ENCODE measurements at regions of chr11 and their contacts with region 1.

Region 1: GRCh38 chr11:118870396-118871345 is 13.0 kb upstream of the CXCR5 start:
- DNase-seq: peak in 1 of 5 donors; percentile 58
- H3K4me3 ChIP-seq: peak overlapping the region; percentile 35
- H3K4me3 Mint-ChIP-seq: peak overlapping the region; percentile 72 to 92 (median 83)
- H3K27ac ChIP-seq: peak overlapping the region; percentile 87
- H3K27ac Mint-ChIP-seq: peak overlapping the region; percentile 98 to 100 (median 99)
- H3K4me1 ChIP-seq: peaks cover 62% of the 10 kb centered on the region
- H3K4me1 Mint-ChIP-seq: peaks cover 47 to 69% (median 56%) of the 10 kb centered on the region in 3 donors
- H3K27me3 ChIP-seq: no peaks in the 10 kb centered on the region
- H3K27me3 Mint-ChIP-seq: no peaks in the 10 kb centered on the region

Region 2: DNA sequence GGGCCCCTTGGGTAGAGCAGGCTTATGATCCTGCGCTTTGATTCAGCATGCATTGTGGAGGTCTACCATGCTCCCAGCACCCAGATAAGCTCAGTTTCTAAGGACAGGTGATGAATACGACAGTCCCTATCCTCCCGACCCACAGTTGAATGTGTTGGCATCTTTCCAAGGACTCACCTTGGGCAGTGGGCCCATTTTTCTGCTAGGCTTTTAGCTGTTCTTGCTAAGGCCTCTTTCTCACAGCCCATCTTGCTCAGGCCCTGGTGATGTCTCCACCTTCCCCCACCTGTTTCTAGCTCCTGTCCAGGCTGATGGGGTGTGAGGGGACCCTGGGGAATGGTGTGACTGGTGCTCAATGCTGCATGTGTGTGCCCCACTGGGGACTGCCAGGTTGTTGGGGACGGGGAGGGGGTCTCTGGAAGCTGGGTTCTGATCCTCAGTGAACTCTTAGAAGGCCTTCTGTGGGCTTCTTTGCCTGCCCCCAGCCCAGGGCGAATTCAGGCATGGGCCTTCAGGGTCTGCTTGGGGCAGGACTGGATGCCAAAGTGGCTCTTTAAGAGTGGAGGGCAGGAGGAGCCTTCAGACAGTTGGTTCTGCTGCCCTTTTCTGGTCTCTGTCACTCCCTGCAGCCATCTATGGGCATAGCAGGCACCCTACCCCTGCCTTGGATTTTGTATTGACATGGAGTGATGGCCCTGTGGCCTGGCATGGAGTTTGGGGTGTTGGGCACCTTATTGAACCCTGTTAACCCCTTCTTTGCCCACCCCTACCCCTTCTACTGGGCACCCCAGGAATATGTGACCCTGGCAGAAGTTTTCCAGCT is 230.1 kb before region 1 on chr11:
- CTCF ChIA-PET with region 1: no interaction called
- POLR2A ChIA-PET with region 1: no interaction called
- DNase-seq: no peak
- H3K4me3 ChIP-seq: no peak overlapping the region
- H3K4me3 Mint-ChIP-seq: no peak overlapping the region
- H3K27ac ChIP-seq: no peak overlapping the region
- H3K27ac Mint-ChIP-seq: no peak overlapping the region
- H3K4me1 ChIP-seq: no peaks in the 10 kb centered on the region
- H3K4me1 Mint-ChIP-seq: no peaks in the 10 kb centered on the region
- H3K27me3 ChIP-seq: no peaks in the 10 kb centered on the region
- H3K27me3 Mint-ChIP-seq: peaks cover 0 to 1% of the 10 kb centered on the region in 2 donors

Region 3: GRCh38 chr11:118859973-118860372 is 10.7 kb before region 1 on chr11:
- CTCF ChIA-PET with region 1: no interaction called
- POLR2A ChIA-PET with region 1: interaction called, 13 read pairs
- DNase-seq: no peak
- H3K4me3 ChIP-seq: no peak overlapping the region
- H3K4me3 Mint-ChIP-seq: no peak overlapping the region
- H3K27ac ChIP-seq: no peak overlapping the region
- H3K27ac Mint-ChIP-seq: peak overlapping the region in 6 of 8 donors; percentile 29 to 67 (median 46)
- H3K4me1 ChIP-seq: no peaks in the 10 kb centered on the region
- H3K4me1 Mint-ChIP-seq: peaks cover 8 to 18% (median 12%) of the 10 kb centered on the region in 3 donors
- H3K27me3 ChIP-seq: no peaks in the 10 kb centered on the region
- H3K27me3 Mint-ChIP-seq: no peaks in the 10 kb centered on the region

Region 4: GRCh38 chr11:118883368-118884071 is 12.8 kb after region 1 on chr11 and contains the start of gene CXCR5:
- CTCF ChIA-PET with region 1: interaction called, 10 read pairs
- POLR2A ChIA-PET with region 1: interaction called, 10 read pairs
- DNase-seq: peak in 1 of 5 donors; percentile 68
- H3K4me3 ChIP-seq: no peak within 1 kb of the TSS
- H3K4me3 Mint-ChIP-seq: peak within 1 kb of the TSS; percentile 54 to 80 (median 76)
- H3K27ac ChIP-seq: peak within 1 kb of the TSS; percentile 21
- H3K27ac Mint-ChIP-seq: peak within 1 kb of the TSS; percentile 69 to 96 (median 88)
- H3K4me1 ChIP-seq: peaks cover 70% of the 10 kb centered on the region
- H3K4me1 Mint-ChIP-seq: peaks cover 53 to 78% (median 60%) of the 10 kb centered on the region in 3 donors
- H3K27me3 ChIP-seq: no peaks in the 10 kb centered on the region
- H3K27me3 Mint-ChIP-seq: no peaks in the 10 kb centered on the region
- total RNA-seq, gene CXCR5: 5.8 to 6.3 TPM

Region 5: GRCh38 chr11:119044708-119045107 is 174.0 kb after region 1 on chr11:
- CTCF ChIA-PET with region 1: no interaction called
- POLR2A ChIA-PET with region 1: no interaction called
- DNase-seq: no peak
- H3K4me3 ChIP-seq: no peak overlapping the region
- H3K4me3 Mint-ChIP-seq: no peak overlapping the region
- H3K27ac ChIP-seq: no peak overlapping the region
- H3K27ac Mint-ChIP-seq: peak overlapping the region in 1 of 8 donors; percentile 19
- H3K4me1 ChIP-seq: no peaks in the 10 kb centered on the region
- H3K4me1 Mint-ChIP-seq: no peaks in the 10 kb centered on the region
- H3K27me3 ChIP-seq: no peaks in the 10 kb centered on the region
- H3K27me3 Mint-ChIP-seq: no peaks in the 10 kb centered on the region